ENCODE measurements at regions of chr11 and their contacts with region 1.

Region 1: GRCh38 chr11:75142714-75143419 is 8.0 kb upstream of the SLCO2B1 start:
- DNase-seq: peak; percentile 83
- ATAC-seq: peak; percentile 85
- H3K4me3 ChIP-seq: no peak overlapping the region
- H3K27ac ChIP-seq: peak overlapping the region; percentile 48
- H3K4me1 ChIP-seq: peaks cover 34% of the 10 kb centered on the region
- H3K27me3 ChIP-seq: no peaks in the 10 kb centered on the region
- CTCF ChIP-seq: no peak

Region 2: GRCh38 chr11:75204685-75205563 is 62.1 kb after region 1 on chr11:
- intact Hi-C with region 1: loop called (anchors 5 kb)
- DNase-seq: peak; percentile 90
- ATAC-seq: peak; percentile 88
- H3K4me3 ChIP-seq: no peak overlapping the region
- H3K27ac ChIP-seq: no peak overlapping the region
- H3K4me1 ChIP-seq: no peaks in the 10 kb centered on the region
- H3K27me3 ChIP-seq: no peaks in the 10 kb centered on the region
- CTCF ChIP-seq: peak; percentile 88

Region 3: DNA sequence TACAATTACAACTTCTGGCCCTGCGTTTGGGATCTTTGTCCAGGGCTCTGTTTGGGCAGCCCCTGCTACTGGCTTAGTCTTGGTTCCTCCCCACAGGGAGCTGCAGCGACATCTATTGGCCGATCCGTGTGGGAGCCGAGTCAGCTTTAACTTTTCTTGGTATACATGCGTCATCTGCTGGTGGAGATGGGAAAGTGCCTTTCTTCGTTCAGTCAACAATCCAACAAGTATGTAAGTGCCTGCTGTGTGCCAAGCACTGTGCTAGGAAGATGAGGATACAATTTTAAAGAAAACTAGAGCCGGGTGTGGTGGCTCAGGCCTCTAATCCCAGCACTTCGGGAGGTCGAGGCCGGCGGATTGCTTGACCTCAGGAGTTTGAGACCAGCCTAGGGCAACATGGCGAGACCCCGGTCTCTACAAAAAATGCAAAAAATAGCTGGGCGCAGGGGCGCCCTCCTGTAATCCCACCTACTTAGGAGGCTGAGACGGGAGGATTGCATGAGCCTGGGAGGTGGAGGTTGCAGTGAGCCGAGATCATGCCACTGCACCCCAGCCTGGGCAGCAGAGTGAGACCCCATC is 105.9 kb after region 1 on chr11:
- intact Hi-C with region 1: loop called (anchors 2 kb)
- DNase-seq: peak; percentile 90
- ATAC-seq: peak; percentile 98
- H3K4me3 ChIP-seq: no peak overlapping the region
- H3K27ac ChIP-seq: no peak overlapping the region
- H3K4me1 ChIP-seq: no peaks in the 10 kb centered on the region
- H3K27me3 ChIP-seq: peaks cover 4% of the 10 kb centered on the region
- CTCF ChIP-seq: peak; percentile 99